ENCODE measurements at regions of chrX and their contacts with region 1.

Region 1: GRCh38 chrX:137194164-137194563 is 160.4 kb upstream of the GPR101 start:
- DNase-seq: peak; percentile 5 to 47 (median 22)
- ATAC-seq: peak; percentile 85
- H3K4me3 ChIP-seq: no peak overlapping the region
- H3K27ac ChIP-seq: no peak overlapping the region
- H3K4me1 ChIP-seq: no peaks in the 10 kb centered on the region
- H3K27me3 ChIP-seq: no peaks in the 10 kb centered on the region
- CTCF ChIP-seq: peak; percentile 65 to 71 (median 69)
- EP300 ChIP-seq: no peak
- POLR2A ChIP-seq: no peak
- RAD21 ChIP-seq: peak; percentile 49 to 64

Region 2: DNA sequence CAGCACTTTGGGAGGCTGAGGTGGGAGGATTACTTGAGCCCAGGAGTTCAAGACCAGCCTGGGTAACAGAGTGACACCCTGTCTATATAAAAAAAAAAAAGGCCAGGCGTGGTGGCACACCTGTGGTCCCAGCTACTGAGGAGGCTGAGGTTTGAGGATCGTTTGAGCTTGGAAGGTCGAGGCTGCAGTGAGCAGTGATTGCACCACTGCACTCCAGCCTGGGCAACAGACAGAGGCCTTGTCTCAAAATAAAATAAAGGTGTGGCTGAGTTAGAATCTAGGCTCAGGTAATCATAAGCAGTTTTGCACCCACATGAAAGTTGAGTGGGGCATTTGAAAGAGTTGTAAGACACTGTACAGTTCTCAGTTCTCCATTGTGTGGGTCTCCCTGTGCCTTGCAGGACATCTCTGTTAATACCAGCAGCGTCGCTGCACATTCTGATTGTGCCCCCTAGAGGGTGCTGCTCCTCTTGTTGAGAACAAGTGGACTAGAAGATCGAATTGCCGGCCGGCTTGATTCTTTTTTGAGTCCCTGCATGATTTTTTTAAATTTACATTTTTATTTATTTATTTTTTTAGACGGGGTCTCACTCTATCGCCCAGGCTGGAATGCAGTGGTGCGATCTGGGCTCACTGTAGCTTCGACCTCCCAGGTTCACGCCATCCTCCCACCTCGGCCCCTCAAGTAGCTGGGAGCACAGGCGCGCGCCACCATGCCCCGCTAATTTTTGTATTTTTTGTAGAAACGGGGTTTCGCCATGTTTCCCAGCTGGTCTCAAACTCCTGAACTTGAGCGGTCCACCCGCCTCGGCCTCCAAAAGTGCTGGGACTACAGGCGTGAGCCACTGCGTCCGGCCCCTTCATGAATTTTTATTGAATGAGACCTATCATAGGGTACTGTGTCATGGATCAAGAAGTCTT is 240.0 kb before region 1 on chrX:
- CTCF ChIA-PET with region 1: interaction called, 17 read pairs
- POLR2A ChIA-PET with region 1: no interaction called
- in situ Hi-C with region 1: loop called (anchors 5 kb)
- intact Hi-C with region 1: loop called (anchors 1 kb)
- DNase-seq: peak; percentile 37 to 83 (median 48)
- ATAC-seq: peak; percentile 99
- H3K4me3 ChIP-seq: no peak overlapping the region
- H3K27ac ChIP-seq: no peak overlapping the region
- H3K4me1 ChIP-seq: no peaks in the 10 kb centered on the region; a peak in 1 of 5 replicates
- H3K27me3 ChIP-seq: no peaks in the 10 kb centered on the region
- CTCF ChIP-seq: peak; percentile 68 to 80 (median 79)
- EP300 ChIP-seq: no peak
- POLR2A ChIP-seq: no peak
- RAD21 ChIP-seq: peak; percentile 28 to 46; a peak in 2 of 4 replicates

Region 3: GRCh38 chrX:137143864-137144263 is 50.3 kb before region 1 on chrX:
- CTCF ChIA-PET with region 1: no interaction called
- POLR2A ChIA-PET with region 1: no interaction called
- in situ Hi-C with region 1: no loop called
- intact Hi-C with region 1: no loop called
- DNase-seq: no peak
- ATAC-seq: no peak
- H3K4me3 ChIP-seq: no peak overlapping the region
- H3K27ac ChIP-seq: no peak overlapping the region
- H3K4me1 ChIP-seq: no peaks in the 10 kb centered on the region
- H3K27me3 ChIP-seq: no peaks in the 10 kb centered on the region
- CTCF ChIP-seq: no peak
- EP300 ChIP-seq: no peak
- POLR2A ChIP-seq: no peak
- RAD21 ChIP-seq: no peak

Region 4: DNA sequence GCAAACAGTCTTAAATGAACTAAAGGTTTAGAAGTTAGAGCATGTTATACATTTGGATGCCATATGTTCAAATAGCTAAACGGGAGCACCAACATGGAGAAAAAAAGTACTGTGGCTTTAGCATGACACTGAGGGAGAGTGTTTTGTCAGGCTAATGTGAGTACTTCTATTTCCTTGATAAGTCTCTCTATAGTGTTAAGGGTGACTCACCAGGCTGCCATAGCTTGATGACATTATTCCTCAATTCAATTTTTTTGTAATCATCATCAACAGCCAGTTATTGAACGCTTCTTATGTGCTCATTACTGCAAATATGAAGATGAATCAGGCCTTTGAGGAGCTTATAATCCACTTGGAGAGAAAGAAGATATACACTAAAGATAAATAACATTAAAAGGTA is 51.0 kb after region 1 on chrX:
- CTCF ChIA-PET with region 1: no interaction called
- POLR2A ChIA-PET with region 1: no interaction called
- in situ Hi-C with region 1: no loop called
- intact Hi-C with region 1: no loop called
- DNase-seq: no peak
- ATAC-seq: no peak
- H3K4me3 ChIP-seq: no peak overlapping the region
- H3K27ac ChIP-seq: no peak overlapping the region
- H3K4me1 ChIP-seq: no peaks in the 10 kb centered on the region
- H3K27me3 ChIP-seq: no peaks in the 10 kb centered on the region
- CTCF ChIP-seq: no peak
- EP300 ChIP-seq: no peak
- POLR2A ChIP-seq: no peak
- RAD21 ChIP-seq: no peak